Uterus (tissue), 4 donors: ENCODE measurements at regions of chr19 and their contacts with region 1.

Region 1: GRCh38 chr19:1243761-1244692 is 2.5 kb downstream of the ATP5F1D start:
- DNase-seq: peak; percentile 89 to 90
- H3K4me3 ChIP-seq: no peak overlapping the region
- H3K27ac ChIP-seq: peak overlapping the region; percentile 88 to 97
- H3K4me1 ChIP-seq: peaks cover 0 to 18% of the 10 kb centered on the region in 2 donors
- H3K27me3 ChIP-seq: no peaks in the 10 kb centered on the region
- CTCF ChIP-seq: peak; percentile 96 to 100 (median 99)
- POLR2A ChIP-seq: peak in 1 of 2 donors; percentile 44

Region 2: GRCh38 chr19:1141944-1142343 is 102.1 kb before region 1 on chr19:
- intact Hi-C with region 1: no loop called
- DNase-seq: no peak
- H3K4me3 ChIP-seq: no peak overlapping the region
- H3K27ac ChIP-seq: no peak overlapping the region
- H3K4me1 ChIP-seq: peaks cover 0 to under 1% of the 10 kb centered on the region in 2 donors
- H3K27me3 ChIP-seq: no peaks in the 10 kb centered on the region
- CTCF ChIP-seq: no peak
- POLR2A ChIP-seq: no peak

Region 3: GRCh38 chr19:1266116-1266915 is 22.3 kb after region 1 on chr19:
- intact Hi-C with region 1: loop called (anchors 1 kb)
- DNase-seq: peak; percentile 86 to 92
- H3K4me3 ChIP-seq: peak overlapping the region; percentile 22 to 48
- H3K27ac ChIP-seq: peak overlapping the region; percentile 90 to 91
- H3K4me1 ChIP-seq: peaks cover 36 to 59% of the 10 kb centered on the region in 2 donors
- H3K27me3 ChIP-seq: no peaks in the 10 kb centered on the region
- CTCF ChIP-seq: no peak
- POLR2A ChIP-seq: no peak